Esophagus muscularis mucosa (tissue), 4 donors: ENCODE measurements at regions of chr17 and their contacts with region 1.

Region 1: DNA sequence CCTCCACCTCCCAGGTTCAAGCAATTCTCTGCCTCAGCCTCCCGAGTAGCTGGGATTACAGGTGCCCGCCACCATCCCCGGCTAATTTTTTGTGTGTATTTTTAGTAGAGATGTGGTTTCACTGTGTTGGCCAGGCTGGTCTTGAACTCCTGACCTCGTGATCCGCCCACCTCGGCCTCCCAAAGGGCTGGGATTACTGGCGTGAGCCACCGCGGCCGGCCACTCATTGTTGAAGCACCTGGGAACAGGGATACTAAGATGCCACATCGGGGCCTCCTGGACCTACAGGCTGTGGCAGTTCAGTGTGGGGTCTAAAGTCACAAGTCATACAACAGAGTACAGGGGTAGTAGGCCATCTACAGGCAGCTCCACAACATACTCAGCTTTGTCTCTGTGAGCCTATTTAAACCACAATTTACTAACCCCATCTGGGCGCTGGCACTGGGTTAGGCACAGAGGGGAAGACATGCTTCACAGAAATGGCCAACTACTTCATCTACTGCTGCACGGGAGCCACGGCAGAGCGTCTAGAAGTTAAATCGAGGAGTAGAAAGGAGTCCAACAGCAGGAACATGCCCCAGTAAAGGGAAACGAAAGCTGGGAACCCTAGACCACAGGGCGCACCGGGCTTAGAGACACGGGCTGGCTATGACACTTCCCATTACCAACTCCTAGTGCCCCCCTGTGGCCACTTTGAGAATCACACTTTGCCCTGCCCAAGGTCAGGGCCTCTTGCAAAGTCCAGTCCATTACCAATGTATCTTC is 4.3 kb downstream of the VAMP2 start:
- DNase-seq: peak; percentile 99
- H3K4me3 ChIP-seq: peak overlapping the region in 1 of 4 donors; percentile 15
- H3K27ac ChIP-seq: peak overlapping the region; percentile 100
- H3K4me1 ChIP-seq: peaks cover 42 to 66% (median 65%) of the 10 kb centered on the region in 4 donors
- H3K27me3 ChIP-seq: no peaks in the 10 kb centered on the region
- CTCF ChIP-seq: peak; percentile 94 to 98 (median 96)
- EP300 ChIP-seq: no peak
- POLR2A ChIP-seq: no peak

Region 2: DNA sequence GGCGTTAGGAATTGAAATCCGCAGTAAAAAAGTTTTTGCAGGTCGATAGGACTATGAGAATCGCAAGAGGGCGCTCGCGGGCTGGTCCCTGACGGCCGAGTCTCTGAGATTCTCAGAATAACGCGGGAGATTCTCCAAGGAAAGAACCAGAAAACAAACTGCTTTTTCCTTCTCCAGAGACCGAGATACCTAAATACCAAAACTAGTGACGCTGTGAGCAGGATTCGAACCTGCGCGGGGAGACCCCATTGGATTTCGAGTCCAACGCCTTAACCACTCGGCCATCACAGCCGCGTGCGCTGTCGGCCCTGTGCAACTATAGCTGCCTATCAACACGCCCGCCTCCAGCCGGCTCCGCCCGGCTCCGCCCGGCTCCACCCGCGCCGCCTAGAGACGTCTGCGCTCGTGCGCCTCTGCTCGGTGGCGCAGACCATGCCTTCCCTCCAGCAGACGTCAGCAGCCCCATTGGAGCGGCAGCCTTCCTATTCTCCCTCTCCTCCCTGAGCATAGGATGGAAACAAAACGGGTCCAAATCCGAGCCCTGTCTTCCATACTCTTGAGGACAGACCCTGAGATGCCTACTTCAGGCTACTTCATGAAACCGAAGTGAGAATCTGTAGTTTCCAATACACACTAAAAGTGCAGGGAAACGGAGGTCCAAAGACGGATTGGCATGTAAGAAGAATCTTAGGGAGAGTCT is 19.6 kb before region 1 on chr17:
- intact Hi-C with region 1: loop called (anchors 1 kb)
- DNase-seq: peak; percentile 99
- H3K4me3 ChIP-seq: peak overlapping the region; percentile 2 to 31 (median 20)
- H3K27ac ChIP-seq: peak overlapping the region; percentile 85 to 100 (median 97)
- H3K4me1 ChIP-seq: peaks cover 31 to 61% (median 61%) of the 10 kb centered on the region in 4 donors
- H3K27me3 ChIP-seq: no peaks in the 10 kb centered on the region
- CTCF ChIP-seq: peak; percentile 79 to 94 (median 83)
- EP300 ChIP-seq: no peak
- POLR2A ChIP-seq: peak; percentile 35